Aorta (tissue), 5 donors: ENCODE measurements at regions of chr11 and their contacts with region 1.

Region 1: DNA sequence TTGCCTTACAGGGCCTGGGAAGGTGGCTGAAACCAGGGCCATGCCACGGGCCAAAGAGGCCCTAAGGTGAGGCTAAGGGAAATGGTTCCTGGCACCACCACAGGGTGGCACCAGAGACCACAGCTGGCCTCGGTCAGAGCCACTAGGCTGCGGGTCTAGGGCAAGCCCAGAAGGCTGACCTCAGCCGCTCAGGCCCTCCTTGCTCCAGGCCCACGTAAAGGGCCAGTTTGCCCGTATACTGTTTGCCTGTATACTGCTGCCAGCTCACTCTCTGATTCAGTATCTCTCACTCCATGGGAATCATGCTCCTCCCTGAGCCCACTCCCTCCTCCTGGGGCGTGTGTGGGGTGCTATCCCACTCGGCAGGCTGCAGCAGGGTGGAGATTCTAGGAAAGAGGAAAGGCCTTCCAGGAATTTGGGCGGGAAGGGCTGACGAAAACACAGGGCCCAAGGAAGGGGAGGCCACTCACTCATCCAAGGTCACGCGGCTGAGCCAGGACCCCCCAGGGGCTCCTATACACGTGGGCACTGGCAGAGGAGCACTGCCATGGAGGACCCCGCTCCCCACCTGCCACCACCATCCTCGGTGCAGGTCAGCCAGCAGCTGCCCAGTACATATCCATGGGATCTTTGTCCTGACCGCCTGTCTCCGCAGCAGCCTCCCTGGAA is 62.4 kb downstream of the NECTIN1 start:
- DNase-seq: peak; percentile 83 to 92
- ATAC-seq: peak; percentile 91
- H3K4me3 ChIP-seq: no peak overlapping the region
- H3K27ac ChIP-seq: no peak overlapping the region
- H3K4me1 ChIP-seq: no peaks in the 10 kb centered on the region
- H3K27me3 ChIP-seq: no peaks in the 10 kb centered on the region

Region 2: GRCh38 chr11:119728651-119729580 is 62.3 kb after region 1 on chr11 and contains the start of gene NECTIN1:
- intact Hi-C with region 1: loop called (anchors 5 kb)
- DNase-seq: peak; percentile 92 to 97
- ATAC-seq: peak; percentile 95
- H3K4me3 ChIP-seq: peak within 1 kb of the TSS; percentile 45 to 82
- H3K27ac ChIP-seq: peak within 1 kb of the TSS; percentile 29 to 49
- H3K4me1 ChIP-seq: no peaks in the 10 kb centered on the region
- H3K27me3 ChIP-seq: no peaks in the 10 kb centered on the region
- total RNA-seq, gene NECTIN1: 5.5 to 7.1 TPM

Region 3: GRCh38 chr11:119741369-119742262 is 75.0 kb after region 1 on chr11:
- intact Hi-C with region 1: loop called in 1 of 2 experiments (anchors 5 kb)
- DNase-seq: peak; percentile 64 to 87
- ATAC-seq: peak; percentile 67
- H3K4me3 ChIP-seq: no peak overlapping the region
- H3K27ac ChIP-seq: no peak overlapping the region
- H3K4me1 ChIP-seq: no peaks in the 10 kb centered on the region
- H3K27me3 ChIP-seq: no peaks in the 10 kb centered on the region

Region 4: GRCh38 chr11:120013325-120014270 is 347.0 kb after region 1 on chr11:
- intact Hi-C with region 1: loop called (anchors 5 to 10 kb)
- DNase-seq: no peak
- ATAC-seq: peak; percentile 48
- H3K4me3 ChIP-seq: no peak overlapping the region
- H3K27ac ChIP-seq: no peak overlapping the region
- H3K4me1 ChIP-seq: no peaks in the 10 kb centered on the region
- H3K27me3 ChIP-seq: no peaks in the 10 kb centered on the region

Region 5: DNA sequence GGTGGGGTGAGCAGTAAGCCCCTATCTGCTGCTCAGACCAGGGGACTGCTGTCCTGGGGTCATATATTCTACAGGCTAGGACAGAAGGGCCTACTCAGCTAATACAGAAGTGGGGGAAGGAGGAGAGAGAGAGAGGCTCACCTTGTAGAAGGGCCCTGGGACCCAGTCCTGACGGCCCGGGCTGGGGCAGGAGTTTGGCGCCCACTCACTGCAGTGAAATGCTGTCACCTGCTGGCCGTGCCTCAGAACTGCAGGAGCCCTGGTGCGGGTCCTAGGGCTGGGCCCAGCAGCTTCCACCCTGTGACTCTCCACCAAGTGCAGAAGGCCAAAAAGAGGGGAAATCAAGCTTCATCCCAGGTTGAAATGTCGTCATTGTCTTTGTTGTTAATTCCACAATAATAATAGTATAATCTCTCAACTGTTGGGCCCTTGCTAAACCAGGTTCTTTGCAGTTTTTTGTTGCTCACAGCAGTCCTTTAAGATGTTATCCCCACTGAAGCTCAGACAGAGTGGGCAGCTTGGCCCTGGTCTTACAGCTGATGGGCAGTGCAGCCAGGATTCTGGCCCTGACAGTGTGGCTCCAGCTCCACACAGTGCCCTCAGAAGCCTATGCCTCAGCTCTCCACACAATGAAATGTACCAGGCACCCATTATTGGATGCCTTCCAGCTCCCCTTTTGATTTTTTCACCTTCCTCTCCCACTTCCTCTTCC is 441.7 kb after region 1 on chr11:
- intact Hi-C with region 1: loop called (anchors 2 kb)
- DNase-seq: peak; percentile 72 to 91
- ATAC-seq: peak; percentile 84
- H3K4me3 ChIP-seq: no peak overlapping the region
- H3K27ac ChIP-seq: no peak overlapping the region
- H3K4me1 ChIP-seq: no peaks in the 10 kb centered on the region
- H3K27me3 ChIP-seq: no peaks in the 10 kb centered on the region